ENCODE measurements at regions of chr7 and their contacts with region 1.

Region 1: GRCh38 chr7:10889266-10889898 is 84.3 kb upstream of the PHF14 start:
- DNase-seq: peak; percentile 46
- ATAC-seq: peak; percentile 94
- H3K4me3 ChIP-seq: no peak overlapping the region
- H3K27ac ChIP-seq: no peak overlapping the region
- H3K4me1 ChIP-seq: no peaks in the 10 kb centered on the region; the same call in 1 of the 2 replicates
- H3K27me3 ChIP-seq: 0 out of 5 replicates have a peak, but pooled peaks cover 0 to under 1% of the 10 kb centered on the region in 2 experiments
- CTCF ChIP-seq: peak; percentile 82
- EP300 ChIP-seq: no peak
- POLR2A ChIP-seq: no peak
- RAD21 ChIP-seq: peak; percentile 56

Region 2: GRCh38 chr7:10637991-10638390 is 251.4 kb before region 1 on chr7:
- CTCF ChIA-PET with region 1: no interaction called
- POLR2A ChIA-PET with region 1: no interaction called
- in situ Hi-C with region 1: no loop called
- intact Hi-C with region 1: loop called (anchors 1 kb)
- DNase-seq: no peak
- ATAC-seq: no peak
- H3K4me3 ChIP-seq: no peak overlapping the region
- H3K27ac ChIP-seq: no peak overlapping the region
- H3K4me1 ChIP-seq: no peaks in the 10 kb centered on the region
- H3K27me3 ChIP-seq: no peaks in the 10 kb centered on the region
- CTCF ChIP-seq: no peak
- EP300 ChIP-seq: no peak
- POLR2A ChIP-seq: no peak
- RAD21 ChIP-seq: no peak

Region 3: DNA sequence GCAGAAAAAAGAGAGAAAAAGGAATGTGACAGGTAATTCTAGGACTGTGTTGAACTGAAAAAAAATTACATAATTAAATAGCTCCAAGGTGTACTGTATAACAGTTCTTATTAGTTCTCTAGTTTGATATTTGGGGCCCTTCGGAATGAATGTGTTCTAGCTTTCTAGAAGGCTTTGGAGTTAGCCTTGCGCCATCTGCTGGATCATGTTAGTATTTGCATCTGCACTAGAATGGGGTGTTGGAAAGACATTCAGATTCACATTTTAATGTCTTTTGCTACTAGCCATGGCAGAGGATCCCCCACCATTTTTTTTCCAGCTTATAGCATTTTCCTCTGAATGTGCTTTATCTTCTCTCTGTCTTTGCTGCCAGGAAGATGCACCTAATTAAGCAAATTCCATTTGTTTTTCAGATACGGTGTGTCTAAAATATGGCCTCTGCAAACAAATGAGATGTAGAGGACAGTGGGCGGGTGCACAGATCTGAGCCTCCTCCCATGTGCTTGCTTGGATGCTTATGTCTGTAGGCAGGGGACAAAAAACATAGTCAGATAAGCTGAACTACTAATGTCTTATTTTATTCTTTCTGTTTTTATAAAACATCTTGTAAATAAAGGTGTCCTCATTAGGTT is 322.8 kb after region 1 on chr7:
- CTCF ChIA-PET with region 1: no interaction called
- POLR2A ChIA-PET with region 1: no interaction called
- in situ Hi-C with region 1: no loop called
- intact Hi-C with region 1: loop called (anchors 5 kb)
- DNase-seq: peak; percentile 55
- ATAC-seq: peak; percentile 83
- H3K4me3 ChIP-seq: no peak overlapping the region
- H3K27ac ChIP-seq: no peak overlapping the region
- H3K4me1 ChIP-seq: peaks cover 14% of the 10 kb centered on the region
- H3K27me3 ChIP-seq: no peaks in the 10 kb centered on the region
- CTCF ChIP-seq: peak; percentile 77
- EP300 ChIP-seq: no peak
- POLR2A ChIP-seq: no peak
- RAD21 ChIP-seq: no peak

Region 4: DNA sequence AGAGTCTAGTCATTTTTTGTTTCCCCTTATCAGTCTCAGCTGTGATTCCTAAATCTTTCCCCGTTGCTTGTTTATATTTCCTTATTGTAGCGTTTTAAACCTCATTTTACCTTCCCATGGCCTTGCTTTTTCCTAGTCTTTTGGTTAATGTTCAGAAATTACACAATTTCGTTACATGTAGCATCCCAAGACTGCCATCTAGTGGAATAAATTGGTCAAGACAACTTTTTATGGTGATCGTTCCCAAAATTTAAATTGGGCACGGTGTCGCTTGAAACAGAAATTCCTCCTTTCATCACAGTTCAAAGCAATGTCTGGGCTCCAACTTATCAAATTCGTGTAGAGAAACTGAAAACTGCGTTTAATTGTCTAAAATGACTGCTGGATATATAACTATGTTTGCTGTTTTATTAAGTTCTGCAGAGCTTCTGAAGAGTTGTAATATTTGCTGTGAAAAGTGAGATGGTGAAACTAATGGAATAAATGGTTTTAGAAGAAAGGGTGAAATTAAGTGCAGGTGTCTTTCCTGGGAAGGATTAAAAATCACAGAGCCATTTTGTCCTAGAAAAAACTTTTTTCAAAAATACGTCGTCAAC is 454.5 kb after region 1 on chr7:
- CTCF ChIA-PET with region 1: no interaction called
- POLR2A ChIA-PET with region 1: no interaction called
- in situ Hi-C with region 1: no loop called
- intact Hi-C with region 1: loop called (anchors 5 kb)
- DNase-seq: peak; percentile 24
- ATAC-seq: no peak
- H3K4me3 ChIP-seq: no peak overlapping the region
- H3K27ac ChIP-seq: no peak overlapping the region
- H3K4me1 ChIP-seq: 0 out of 2 replicates have a peak, but pooled peaks cover 7% of the 10 kb centered on the region
- H3K27me3 ChIP-seq: no peaks in the 10 kb centered on the region; a peak in 1 of 5 replicates
- CTCF ChIP-seq: peak; percentile 73
- EP300 ChIP-seq: no peak
- POLR2A ChIP-seq: no peak
- RAD21 ChIP-seq: peak; percentile 34; the same call in 1 of the 2 replicates

Measured in HepG2 (cell line).